ENCODE measurements at regions of chr9 and their contacts with region 1.

Region 1: DNA sequence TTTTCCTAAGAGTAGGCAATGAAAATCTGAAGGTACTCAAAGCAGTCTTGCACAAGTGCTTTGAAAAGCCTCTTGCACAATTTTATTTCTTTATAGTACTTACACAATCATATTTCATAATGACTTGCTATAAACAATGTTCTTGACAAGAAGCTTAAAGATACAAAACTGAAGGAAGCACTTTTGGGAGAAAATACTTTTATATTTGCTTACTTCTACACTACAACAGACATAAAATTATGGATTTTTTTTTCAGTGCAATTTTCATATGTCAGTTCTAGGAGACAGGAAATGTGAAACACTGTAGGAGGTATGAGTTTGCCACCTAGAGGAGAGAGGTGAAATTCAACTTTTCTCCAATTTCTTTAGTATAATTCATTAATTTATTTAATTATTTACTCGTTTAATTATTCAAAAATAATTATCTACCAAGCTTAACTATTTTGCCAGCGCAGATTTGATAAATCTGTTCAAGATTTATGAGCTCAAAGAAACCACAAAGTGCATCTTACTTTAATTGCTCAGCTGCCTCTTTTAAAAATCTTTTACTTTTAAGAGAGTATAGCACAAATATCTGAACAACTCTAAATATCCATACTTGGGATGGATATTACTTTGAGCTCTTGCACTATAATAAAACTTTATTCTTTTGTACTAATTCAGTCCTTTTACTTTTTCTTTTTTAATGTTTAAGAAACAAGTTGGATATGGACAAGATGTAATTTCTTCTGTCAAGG is 29.0 kb upstream of the CDKN2B start:
- DNase-seq: peak; percentile 33
- ATAC-seq: peak; percentile 57; the same call in 1 of the 2 replicates
- H3K4me3 ChIP-seq: no peak overlapping the region
- H3K27ac ChIP-seq: no peak overlapping the region
- H3K4me1 ChIP-seq: peaks cover 11 to 17% of the 10 kb centered on the region in 2 experiments
- H3K27me3 ChIP-seq: no peaks in the 10 kb centered on the region
- CTCF ChIP-seq: peak; percentile 48 to 60 (median 55); a peak in 4 of 6 replicates
- POLR2A ChIP-seq: no peak
- RAD21 ChIP-seq: peak; percentile 76

Region 2: DNA sequence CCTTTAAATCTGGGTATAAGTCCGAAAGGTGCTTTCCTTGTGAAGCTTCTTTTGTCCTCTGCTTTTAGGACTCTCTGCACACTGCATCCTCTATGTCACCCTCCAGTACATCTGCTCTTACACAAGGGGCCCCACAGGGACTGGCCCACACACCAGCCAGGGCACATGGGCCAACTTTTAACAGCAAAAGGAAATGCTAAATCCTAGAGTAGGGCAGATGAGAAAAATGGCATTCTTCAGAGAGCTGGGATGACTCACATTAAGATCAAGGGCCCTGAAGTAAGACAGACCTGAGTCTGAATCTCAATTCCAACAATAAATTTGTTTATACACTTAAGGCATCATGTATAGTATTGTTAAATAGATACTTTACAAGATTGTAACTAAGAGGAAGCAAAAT is 11.3 kb after region 1 on chr9:
- CTCF ChIA-PET with region 1: interaction called, 13 read pairs
- POLR2A ChIA-PET with region 1: interaction called, 3 read pairs
- RAD21 ChIA-PET with region 1: no interaction called
- intact Hi-C with region 1: no loop called
- DNase-seq: no peak
- ATAC-seq: peak; percentile 34; the same call in 1 of the 2 replicates
- H3K4me3 ChIP-seq: no peak overlapping the region
- H3K27ac ChIP-seq: no peak overlapping the region
- H3K4me1 ChIP-seq: peaks cover 17 to 20% of the 10 kb centered on the region in 2 experiments
- H3K27me3 ChIP-seq: no peaks in the 10 kb centered on the region
- CTCF ChIP-seq: no peak
- POLR2A ChIP-seq: no peak
- RAD21 ChIP-seq: no peak

Measured in HCT116 (cell line).